ENCODE measurements at regions of chrX and their contacts with region 1.

Region 1: GRCh38 chrX:123859846-123860838 is at the start of gene XIAP:
- DNase-seq: peak; percentile 24 to 85 (median 48)
- ATAC-seq: peak; percentile 73
- H3K4me3 ChIP-seq: peak within 1 kb of the TSS; percentile 88
- H3K4me3 Mint-ChIP-seq: peak within 1 kb of the TSS; percentile 94
- H3K27ac ChIP-seq: peak within 1 kb of the TSS; percentile 89 to 93
- H3K27ac Mint-ChIP-seq: peak within 1 kb of the TSS; percentile 97
- H3K4me1 ChIP-seq: peaks cover 23% of the 10 kb centered on the region
- H3K4me1 Mint-ChIP-seq: peaks cover 16% of the 10 kb centered on the region
- H3K27me3 ChIP-seq: no peaks in the 10 kb centered on the region
- H3K27me3 Mint-ChIP-seq: no peaks in the 10 kb centered on the region
- CTCF ChIP-seq: no peak
- total RNA-seq, gene XIAP: 20.9 to 26.0 TPM

Region 2: DNA sequence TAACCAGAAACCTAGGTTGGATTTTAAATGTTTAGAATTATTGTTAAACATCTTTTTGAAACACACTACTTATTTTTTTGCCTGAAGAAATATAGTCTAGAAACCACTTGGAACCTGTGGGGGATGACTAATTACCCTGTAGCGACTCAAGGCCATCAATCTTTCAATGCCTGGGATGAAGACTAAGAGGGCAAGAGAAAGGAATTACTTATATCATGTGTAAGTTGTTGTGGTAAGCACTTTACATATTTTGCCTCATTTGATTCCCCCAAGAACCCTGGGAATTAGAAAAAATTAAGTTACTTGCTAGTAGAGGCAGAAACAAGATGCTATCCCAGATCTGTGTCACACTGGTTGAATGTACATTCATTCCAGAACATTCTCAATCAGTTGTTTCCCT is 847.0 kb before region 1 on chrX:
- CTCF ChIA-PET with region 1: no interaction called
- POLR2A ChIA-PET with region 1: no interaction called
- intact Hi-C with region 1: no loop called
- DNase-seq: no peak
- ATAC-seq: no peak
- H3K4me3 ChIP-seq: no peak overlapping the region
- H3K4me3 Mint-ChIP-seq: no peak overlapping the region
- H3K27ac ChIP-seq: no peak overlapping the region
- H3K27ac Mint-ChIP-seq: no peak overlapping the region
- H3K4me1 ChIP-seq: no peaks in the 10 kb centered on the region
- H3K4me1 Mint-ChIP-seq: no peaks in the 10 kb centered on the region
- H3K27me3 ChIP-seq: no peaks in the 10 kb centered on the region
- H3K27me3 Mint-ChIP-seq: no peaks in the 10 kb centered on the region
- CTCF ChIP-seq: no peak

Region 3: GRCh38 chrX:123713841-123714240 is 146.3 kb before region 1 on chrX:
- CTCF ChIA-PET with region 1: no interaction called
- POLR2A ChIA-PET with region 1: no interaction called
- intact Hi-C with region 1: no loop called
- DNase-seq: no peak
- ATAC-seq: no peak
- H3K4me3 ChIP-seq: no peak overlapping the region
- H3K4me3 Mint-ChIP-seq: peak overlapping the region; percentile 30
- H3K27ac ChIP-seq: no peak overlapping the region
- H3K27ac Mint-ChIP-seq: no peak overlapping the region
- H3K4me1 ChIP-seq: peaks cover 12% of the 10 kb centered on the region
- H3K4me1 Mint-ChIP-seq: peaks cover 39% of the 10 kb centered on the region
- H3K27me3 ChIP-seq: no peaks in the 10 kb centered on the region
- H3K27me3 Mint-ChIP-seq: no peaks in the 10 kb centered on the region
- CTCF ChIP-seq: no peak

Region 4: DNA sequence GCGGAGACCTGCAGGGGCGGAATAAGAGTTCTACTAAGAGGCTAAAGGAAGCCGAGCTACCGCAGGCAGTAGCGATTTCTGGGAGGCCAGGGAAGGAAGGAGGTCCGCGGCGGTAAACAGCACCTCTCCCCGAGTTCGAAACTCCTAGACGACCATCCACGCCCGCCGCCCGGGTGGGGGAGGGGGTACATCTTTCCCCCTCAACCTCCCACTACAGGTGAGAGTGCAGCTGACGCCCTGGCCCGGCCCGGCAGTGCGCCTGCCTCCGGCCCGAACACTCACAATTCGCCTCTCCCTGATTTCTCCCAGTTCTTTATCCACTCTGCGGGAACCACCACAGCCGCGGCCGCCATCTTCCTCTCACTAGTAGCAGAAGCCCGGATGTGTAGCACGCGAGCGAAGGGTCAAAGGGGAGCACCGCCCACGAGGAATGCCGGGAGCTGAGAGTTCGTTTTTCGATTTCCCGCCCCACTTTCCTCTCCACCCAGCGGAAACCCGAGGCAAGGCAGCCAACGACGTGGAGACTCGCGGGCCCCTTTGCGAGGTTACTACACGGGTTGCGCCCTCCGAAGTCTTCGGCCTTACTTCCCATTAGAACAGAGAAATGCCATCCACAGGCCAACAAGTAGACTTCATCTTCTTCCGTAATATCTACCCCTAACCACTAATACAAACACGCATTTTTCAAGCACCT is 127.3 kb before region 1 on chrX and contains the start of gene THOC2:
- CTCF ChIA-PET with region 1: no interaction called
- POLR2A ChIA-PET with region 1: no interaction called
- intact Hi-C with region 1: loop called in 1 of 2 experiments (anchors 10 kb)
- DNase-seq: peak; percentile 54 to 90 (median 72)
- ATAC-seq: peak; percentile 96
- H3K4me3 ChIP-seq: peak within 1 kb of the TSS; percentile 73
- H3K4me3 Mint-ChIP-seq: peak within 1 kb of the TSS; percentile 94
- H3K27ac ChIP-seq: peak within 1 kb of the TSS in 1 of 2 donors; percentile 51
- H3K27ac Mint-ChIP-seq: peak within 1 kb of the TSS; percentile 82
- H3K4me1 ChIP-seq: peaks cover 16% of the 10 kb centered on the region
- H3K4me1 Mint-ChIP-seq: peaks cover 44% of the 10 kb centered on the region
- H3K27me3 ChIP-seq: no peaks in the 10 kb centered on the region
- H3K27me3 Mint-ChIP-seq: no peaks in the 10 kb centered on the region
- CTCF ChIP-seq: no peak
- total RNA-seq, gene THOC2: 61.1 to 62.8 TPM

Region 5: DNA sequence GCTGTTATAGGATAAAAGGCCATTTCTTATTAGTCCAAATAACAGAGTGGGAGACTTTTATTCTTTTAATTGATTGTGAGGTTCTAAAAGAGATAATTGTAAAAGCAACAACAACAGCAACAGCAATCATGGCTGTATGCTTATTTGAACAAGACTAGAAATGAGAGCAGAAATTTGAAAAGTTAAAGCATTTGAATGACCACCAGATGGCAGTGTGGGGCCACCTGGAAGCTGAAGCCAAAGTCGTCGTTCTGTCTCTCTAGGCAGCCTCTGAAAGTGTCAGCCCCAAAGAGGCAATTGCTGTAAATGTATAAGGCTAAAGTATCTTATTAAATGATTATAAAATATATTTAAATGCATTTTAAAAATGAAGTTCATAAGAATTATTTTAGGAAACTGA is 528.4 kb after region 1 on chrX:
- CTCF ChIA-PET with region 1: no interaction called
- POLR2A ChIA-PET with region 1: no interaction called
- intact Hi-C with region 1: no loop called
- DNase-seq: peak; percentile 24 to 79 (median 48)
- ATAC-seq: peak; percentile 83
- H3K4me3 ChIP-seq: no peak overlapping the region
- H3K4me3 Mint-ChIP-seq: no peak overlapping the region
- H3K27ac ChIP-seq: no peak overlapping the region
- H3K27ac Mint-ChIP-seq: peak overlapping the region; percentile 36
- H3K4me1 ChIP-seq: no peaks in the 10 kb centered on the region
- H3K4me1 Mint-ChIP-seq: peaks cover 35% of the 10 kb centered on the region
- H3K27me3 ChIP-seq: no peaks in the 10 kb centered on the region
- H3K27me3 Mint-ChIP-seq: no peaks in the 10 kb centered on the region
- CTCF ChIP-seq: peak; percentile 64